GM23248 (cell line): ENCODE measurements at regions of chr11 and their contacts with region 1.

Region 1: DNA sequence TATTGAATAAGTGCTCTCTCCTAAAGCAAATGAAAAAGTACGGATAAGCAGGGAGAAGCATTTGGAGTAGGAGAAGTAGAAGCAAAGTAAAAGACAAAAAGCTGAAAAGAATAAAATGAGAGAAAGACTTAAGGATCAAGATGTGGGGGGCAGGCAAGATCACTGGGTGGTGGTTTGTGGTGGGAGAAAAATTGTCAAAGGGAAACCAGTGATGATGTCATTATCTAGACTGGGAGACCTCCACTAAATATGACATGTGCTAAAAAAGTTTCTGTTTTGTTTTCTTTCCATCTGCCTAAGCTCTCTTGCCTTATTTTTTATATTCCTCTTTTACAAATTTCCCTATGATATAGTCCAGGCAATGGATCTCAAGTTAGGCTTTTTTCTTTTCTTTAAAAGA is 14.8 kb upstream of the MAML2 start:
- DNase-seq: no peak
- H3K4me3 ChIP-seq: no peak overlapping the region
- H3K27ac ChIP-seq: no peak overlapping the region
- H3K4me1 ChIP-seq: peaks cover 9% of the 10 kb centered on the region
- H3K27me3 ChIP-seq: no peaks in the 10 kb centered on the region

Region 2: DNA sequence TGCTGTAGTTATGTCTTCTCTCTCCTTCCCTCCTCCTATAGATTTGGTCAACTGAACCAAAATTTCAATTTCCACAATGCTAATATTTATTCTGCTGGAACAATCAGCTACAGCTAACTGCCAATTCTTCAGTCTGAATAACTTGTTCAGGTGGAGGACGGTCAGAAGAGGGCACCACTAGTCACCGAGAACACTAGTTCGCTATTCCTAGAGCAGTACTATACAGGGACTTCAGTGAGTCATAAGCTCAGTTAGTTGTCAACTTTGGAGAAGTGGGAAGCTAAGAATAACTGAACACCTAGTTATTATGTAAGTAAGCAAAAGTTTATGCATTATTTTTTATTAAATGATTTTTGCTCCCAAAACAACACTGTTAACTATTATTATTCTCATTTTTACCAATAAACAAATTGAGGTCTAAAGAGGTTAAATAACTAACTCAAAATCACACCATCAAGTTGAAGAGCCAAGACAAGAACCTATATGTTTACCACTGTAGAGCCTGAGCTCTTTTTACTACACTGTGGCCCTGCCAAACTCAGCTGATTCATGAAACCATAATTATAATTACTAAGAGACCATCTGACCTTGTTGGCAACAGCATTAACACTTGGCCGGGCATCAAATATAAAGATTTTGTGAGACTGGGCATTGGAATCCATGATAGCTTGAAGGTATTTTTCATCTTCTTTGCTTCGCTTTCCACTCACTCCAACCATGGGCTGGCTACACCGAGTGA is 508.5 kb before region 1 on chr11:
- in situ Hi-C with region 1: loop called (anchors 10 kb)
- DNase-seq: peak; percentile 84
- H3K4me3 ChIP-seq: no peak overlapping the region
- H3K27ac ChIP-seq: peak overlapping the region; percentile 37
- H3K4me1 ChIP-seq: peaks cover 27% of the 10 kb centered on the region
- H3K27me3 ChIP-seq: no peaks in the 10 kb centered on the region

Region 3: DNA sequence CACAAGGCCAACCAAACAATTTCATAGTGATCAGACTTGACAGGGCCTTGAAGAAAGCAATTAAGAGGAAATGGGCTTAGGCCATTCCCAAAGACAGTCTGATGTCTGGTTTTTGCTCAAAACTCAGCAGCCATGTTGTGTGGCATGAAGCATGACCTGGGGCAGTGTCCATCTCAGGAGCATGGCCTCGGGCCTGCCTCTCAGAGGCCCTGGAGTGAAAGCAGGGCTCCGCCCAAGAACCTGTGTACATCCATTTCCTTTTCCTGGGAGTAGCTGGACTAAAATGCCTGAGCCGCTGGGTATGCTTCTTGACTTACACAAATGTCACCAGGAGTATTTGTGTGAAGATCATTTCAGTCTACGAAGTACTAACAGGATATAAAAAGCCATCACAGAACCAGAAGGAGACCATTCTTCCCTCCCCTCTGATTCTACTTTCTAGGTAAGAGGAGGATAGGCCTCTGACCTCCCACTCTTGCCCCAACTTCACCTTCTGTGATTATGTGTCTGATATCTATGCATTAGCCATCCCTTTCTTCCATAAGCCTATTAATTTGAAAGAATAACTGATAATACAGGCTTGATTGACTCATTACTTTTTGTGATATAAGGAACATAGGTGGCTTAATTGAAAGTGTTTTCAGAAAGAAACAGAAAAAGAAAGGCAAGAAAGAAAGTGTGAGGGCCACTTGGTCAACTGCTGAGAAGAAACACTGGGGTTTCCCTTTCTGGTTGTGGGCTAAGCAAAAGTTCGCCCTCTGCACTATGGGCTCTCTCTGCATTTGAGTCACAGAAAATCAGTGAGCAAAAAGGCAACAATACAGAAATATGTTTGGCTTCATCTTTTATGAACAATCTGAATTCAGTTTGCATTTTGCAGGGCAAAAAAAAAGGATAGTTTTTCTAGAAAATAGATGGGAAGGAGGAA is 245.3 kb before region 1 on chr11:
- in situ Hi-C with region 1: no loop called
- DNase-seq: peak; percentile 60
- H3K4me3 ChIP-seq: peak overlapping the region; percentile 26
- H3K27ac ChIP-seq: peak overlapping the region; percentile 79
- H3K4me1 ChIP-seq: peaks cover 45% of the 10 kb centered on the region
- H3K27me3 ChIP-seq: no peaks in the 10 kb centered on the region

Region 4: DNA sequence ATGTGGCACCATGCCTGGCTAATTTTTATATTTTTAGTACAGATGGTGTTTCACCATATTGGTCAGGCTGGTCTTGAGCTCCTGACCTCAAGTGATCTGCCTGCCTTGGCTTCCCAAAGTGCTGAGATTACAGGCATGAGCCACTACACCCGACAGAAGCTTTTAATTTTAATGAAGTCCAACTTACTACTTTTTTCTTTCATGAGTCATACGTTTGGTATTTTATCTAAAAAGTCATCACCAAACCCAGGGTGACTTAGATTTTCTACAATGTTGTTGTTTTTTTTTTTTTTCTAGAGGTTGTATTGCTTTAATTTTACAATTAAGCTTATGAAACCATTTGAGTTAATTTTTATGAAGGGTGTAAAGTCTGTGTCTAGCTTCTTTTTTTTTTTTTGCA is 66.9 kb after region 1 on chr11:
- in situ Hi-C with region 1: loop called (anchors 10 kb)
- DNase-seq: peak; percentile 70
- H3K4me3 ChIP-seq: no peak overlapping the region
- H3K27ac ChIP-seq: 0 out of 2 replicates have a peak overlapping the region, but pooled peaks have one; percentile 19
- H3K4me1 ChIP-seq: peaks cover 13% of the 10 kb centered on the region
- H3K27me3 ChIP-seq: peaks cover 9% of the 10 kb centered on the region; the same call in 1 of the 2 replicates